ENCODE measurements at regions of chr18 and their contacts with region 1.

Region 1: GRCh38 chr18:36284671-36285295 is 12.7 kb upstream of the FHOD3 start:
- DNase-seq: peak; percentile 65 to 82 (median 75)
- H3K4me3 ChIP-seq: no peak overlapping the region
- H3K27ac ChIP-seq: no peak overlapping the region
- H3K4me1 ChIP-seq: no peaks in the 10 kb centered on the region
- H3K27me3 ChIP-seq: peaks cover 0 to 7% (median 3%) of the 10 kb centered on the region in 5 experiments

Region 2: GRCh38 chr18:35756506-35757117 is 528.2 kb before region 1 on chr18:
- CTCF ChIA-PET with region 1: interaction called, 11 read pairs
- POLR2A ChIA-PET with region 1: no interaction called
- DNase-seq: peak; percentile 49 to 77 (median 71)
- H3K4me3 ChIP-seq: no peak overlapping the region
- H3K27ac ChIP-seq: no peak overlapping the region
- H3K4me1 ChIP-seq: no peaks in the 10 kb centered on the region
- H3K27me3 ChIP-seq: no peaks in the 10 kb centered on the region

Region 3: DNA sequence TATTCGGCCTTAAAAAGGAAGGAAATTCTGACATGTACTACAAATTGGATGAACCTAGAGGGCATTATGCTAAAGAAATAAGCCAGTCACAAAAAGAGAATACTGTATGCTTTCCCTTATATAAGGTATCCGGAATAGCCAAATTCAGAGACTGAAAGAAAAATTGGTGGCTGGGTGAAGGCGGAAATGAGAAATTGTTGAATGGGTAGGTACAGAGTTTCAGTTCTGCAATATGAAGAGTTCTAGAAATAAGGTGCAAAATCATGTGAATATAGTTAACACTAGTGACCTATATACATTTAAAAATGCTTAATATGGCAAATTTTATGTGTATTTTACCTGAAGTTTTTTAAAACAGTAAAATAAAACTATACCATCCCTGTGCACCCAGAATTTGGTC is 269.2 kb before region 1 on chr18:
- CTCF ChIA-PET with region 1: interaction called, 26 read pairs
- POLR2A ChIA-PET with region 1: no interaction called
- DNase-seq: no peak
- H3K4me3 ChIP-seq: no peak overlapping the region
- H3K27ac ChIP-seq: no peak overlapping the region
- H3K4me1 ChIP-seq: no peaks in the 10 kb centered on the region
- H3K27me3 ChIP-seq: no peaks in the 10 kb centered on the region

Region 4: DNA sequence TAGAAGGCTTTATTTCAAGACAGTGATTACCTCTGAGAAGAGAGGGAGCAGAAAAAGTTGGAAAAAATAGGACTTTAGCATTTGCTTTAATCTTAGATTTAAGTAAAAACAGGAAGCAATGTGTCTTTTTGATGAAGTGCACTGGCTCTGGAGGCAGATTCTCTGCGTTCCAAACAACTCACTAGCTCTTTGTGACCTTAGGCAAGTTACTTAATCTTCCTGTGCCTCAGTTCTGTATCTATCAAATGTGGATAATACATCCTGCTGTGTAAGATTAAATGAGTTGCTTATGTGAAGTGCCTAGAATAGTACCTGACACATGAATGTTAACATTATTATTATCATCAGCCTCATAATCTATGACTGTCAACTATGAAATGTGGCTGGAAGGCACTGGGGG is 259.8 kb before region 1 on chr18:
- CTCF ChIA-PET with region 1: interaction called, 18 read pairs
- POLR2A ChIA-PET with region 1: no interaction called
- DNase-seq: peak in 1 of 3 donors; percentile 23
- H3K4me3 ChIP-seq: no peak overlapping the region
- H3K27ac ChIP-seq: no peak overlapping the region
- H3K4me1 ChIP-seq: peaks cover 0 to 7% (median 2%) of the 10 kb centered on the region in 4 experiments
- H3K27me3 ChIP-seq: no peaks in the 10 kb centered on the region

Region 5: GRCh38 chr18:36095936-36096519 is 188.8 kb before region 1 on chr18:
- CTCF ChIA-PET with region 1: interaction called, 38 read pairs
- POLR2A ChIA-PET with region 1: no interaction called
- DNase-seq: peak; percentile 72 to 86 (median 82)
- H3K4me3 ChIP-seq: no peak overlapping the region
- H3K27ac ChIP-seq: no peak overlapping the region
- H3K4me1 ChIP-seq: peaks cover 0 to 14% (median 8%) of the 10 kb centered on the region in 4 experiments
- H3K27me3 ChIP-seq: no peaks in the 10 kb centered on the region

Region 6: DNA sequence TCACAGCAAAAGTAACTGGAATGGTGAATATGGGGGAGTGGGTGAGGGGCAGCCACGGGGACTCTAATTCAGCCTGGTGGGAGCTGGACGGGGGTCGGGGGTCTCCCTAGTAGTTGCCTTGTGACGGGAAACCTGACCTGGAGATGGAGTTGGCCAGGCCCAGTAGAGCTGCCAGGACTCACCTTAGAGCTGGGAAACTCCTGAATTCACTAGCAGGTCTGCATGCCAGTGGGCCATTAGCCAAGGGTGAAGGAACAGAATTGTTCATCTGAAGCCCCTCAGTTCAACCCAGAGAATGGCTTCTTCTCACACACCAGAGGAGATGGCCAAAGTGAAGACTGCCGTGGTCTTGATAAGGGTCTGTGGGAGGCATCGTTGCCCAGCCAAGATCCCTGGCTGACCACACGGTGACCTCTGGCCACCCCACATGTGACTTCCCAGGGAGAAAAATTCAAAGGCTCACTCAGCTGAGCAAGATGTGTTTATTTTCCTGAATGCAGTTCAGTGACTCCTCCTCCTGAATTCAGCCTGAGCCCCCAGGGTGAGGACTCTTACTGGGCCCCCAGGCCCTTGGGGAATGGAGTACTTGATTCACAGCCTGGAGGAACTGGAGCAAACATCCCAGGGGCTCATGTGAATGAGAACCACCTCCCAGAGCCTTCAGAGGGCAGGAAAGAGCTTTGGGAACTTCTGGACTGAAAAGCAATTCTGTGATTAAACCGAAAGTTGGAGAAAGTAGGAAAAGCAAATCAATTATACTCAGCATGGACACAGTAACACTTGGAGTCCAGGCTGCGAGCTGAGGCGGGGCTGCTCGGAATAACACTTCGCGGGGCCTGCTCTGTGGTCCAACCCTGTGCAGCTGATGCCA is 72.2 kb before region 1 on chr18:
- CTCF ChIA-PET with region 1: no interaction called
- POLR2A ChIA-PET with region 1: no interaction called
- DNase-seq: no peak
- H3K4me3 ChIP-seq: no peak overlapping the region
- H3K27ac ChIP-seq: no peak overlapping the region
- H3K4me1 ChIP-seq: no peaks in the 10 kb centered on the region
- H3K27me3 ChIP-seq: peaks cover 0 to 1% (median 0%) of the 10 kb centered on the region in 5 experiments